PC-3 (cell line): ENCODE measurements at regions of chr14 and their contacts with region 1.

Region 1: GRCh38 chr14:76918751-76919543 is 92.7 kb downstream of the LRRC74A start:
- DNase-seq: peak; percentile 96
- ATAC-seq: peak; percentile 73
- H3K4me3 ChIP-seq: peak overlapping the region; percentile 28; the same call in 1 of the 2 replicates
- H3K27ac ChIP-seq: peak overlapping the region; percentile 97
- H3K4me1 ChIP-seq: peaks cover 60% of the 10 kb centered on the region
- H3K27me3 ChIP-seq: no peaks in the 10 kb centered on the region
- CTCF ChIP-seq: 0 out of 2 replicates have a peak, but pooled peaks have one; percentile 8

Region 2: GRCh38 chr14:76432827-76433752 is 485.9 kb before region 1 on chr14:
- CTCF ChIA-PET with region 1: interaction called, 13 read pairs
- POLR2A ChIA-PET with region 1: no interaction called
- intact Hi-C with region 1: no loop called
- DNase-seq: no peak
- ATAC-seq: no peak
- H3K4me3 ChIP-seq: no peak overlapping the region
- H3K27ac ChIP-seq: no peak overlapping the region
- H3K4me1 ChIP-seq: no peaks in the 10 kb centered on the region
- H3K27me3 ChIP-seq: peaks cover 91% of the 10 kb centered on the region
- CTCF ChIP-seq: no peak

Region 3: GRCh38 chr14:76894308-76894892 is 24.5 kb before region 1 on chr14:
- CTCF ChIA-PET with region 1: no interaction called
- POLR2A ChIA-PET with region 1: no interaction called
- intact Hi-C with region 1: no loop called
- DNase-seq: no peak
- ATAC-seq: no peak
- H3K4me3 ChIP-seq: no peak overlapping the region
- H3K27ac ChIP-seq: no peak overlapping the region
- H3K4me1 ChIP-seq: no peaks in the 10 kb centered on the region
- H3K27me3 ChIP-seq: no peaks in the 10 kb centered on the region
- CTCF ChIP-seq: no peak

Region 4: GRCh38 chr14:76947078-76947837 is 28.3 kb after region 1 on chr14:
- CTCF ChIA-PET with region 1: interaction called, 8 read pairs
- POLR2A ChIA-PET with region 1: interaction called, 6 read pairs
- intact Hi-C with region 1: loop called (anchors 1 kb)
- DNase-seq: peak; percentile 92
- ATAC-seq: peak; percentile 89
- H3K4me3 ChIP-seq: no peak overlapping the region
- H3K27ac ChIP-seq: peak overlapping the region; percentile 95
- H3K4me1 ChIP-seq: peaks cover 46% of the 10 kb centered on the region
- H3K27me3 ChIP-seq: no peaks in the 10 kb centered on the region
- CTCF ChIP-seq: peak; percentile 52

Region 5: GRCh38 chr14:77023001-77023996 is 104.4 kb after region 1 on chr14:
- CTCF ChIA-PET with region 1: interaction called, 7 read pairs
- POLR2A ChIA-PET with region 1: interaction called, 4 read pairs
- intact Hi-C with region 1: loop called (anchors 1 kb)
- DNase-seq: peak; percentile 61
- ATAC-seq: peak; percentile 10
- H3K4me3 ChIP-seq: peak overlapping the region; percentile 99
- H3K27ac ChIP-seq: peak overlapping the region; percentile 91
- H3K4me1 ChIP-seq: peaks cover 25% of the 10 kb centered on the region
- H3K27me3 ChIP-seq: no peaks in the 10 kb centered on the region
- CTCF ChIP-seq: peak; percentile 35; the same call in 1 of the 2 replicates